Heart left ventricle (tissue), 16 donors: ENCODE measurements at regions of chr15 and their contacts with region 1.

Region 1: GRCh38 chr15:64153480-64154367 is 2.2 kb downstream of the SNX22 start:
- DNase-seq: peak; percentile 88 to 95 (median 91)
- ATAC-seq: peak; percentile 72 to 91 (median 77)
- H3K4me3 ChIP-seq: peak overlapping the region in 3 of 12 donors; percentile 2 to 8 (median 3)
- H3K27ac ChIP-seq: peak overlapping the region in 11 of 12 donors; percentile 50 to 88 (median 80)
- H3K4me1 ChIP-seq: peaks cover 10 to 64% (median 42%) of the 10 kb centered on the region in 12 donors
- H3K27me3 ChIP-seq: peaks cover 0 to 24% (median 0%) of the 10 kb centered on the region in 9 donors
- CTCF ChIP-seq: peak; percentile 94 to 99 (median 98)
- POLR2A ChIP-seq: no peak

Region 2: GRCh38 chr15:63234451-63234870 is 919.3 kb before region 1 on chr15:
- intact Hi-C with region 1: no loop called
- DNase-seq: peak; percentile 55 to 60 (median 56)
- ATAC-seq: peak; percentile 70 to 87 (median 84)
- H3K4me3 ChIP-seq: peak overlapping the region in 2 of 12 donors; percentile 8 to 20
- H3K27ac ChIP-seq: peak overlapping the region; percentile 15 to 85 (median 58)
- H3K4me1 ChIP-seq: peaks cover 2 to 90% (median 33%) of the 10 kb centered on the region in 12 donors
- H3K27me3 ChIP-seq: no peaks in the 10 kb centered on the region
- CTCF ChIP-seq: no peak
- POLR2A ChIP-seq: no peak

Region 3: DNA sequence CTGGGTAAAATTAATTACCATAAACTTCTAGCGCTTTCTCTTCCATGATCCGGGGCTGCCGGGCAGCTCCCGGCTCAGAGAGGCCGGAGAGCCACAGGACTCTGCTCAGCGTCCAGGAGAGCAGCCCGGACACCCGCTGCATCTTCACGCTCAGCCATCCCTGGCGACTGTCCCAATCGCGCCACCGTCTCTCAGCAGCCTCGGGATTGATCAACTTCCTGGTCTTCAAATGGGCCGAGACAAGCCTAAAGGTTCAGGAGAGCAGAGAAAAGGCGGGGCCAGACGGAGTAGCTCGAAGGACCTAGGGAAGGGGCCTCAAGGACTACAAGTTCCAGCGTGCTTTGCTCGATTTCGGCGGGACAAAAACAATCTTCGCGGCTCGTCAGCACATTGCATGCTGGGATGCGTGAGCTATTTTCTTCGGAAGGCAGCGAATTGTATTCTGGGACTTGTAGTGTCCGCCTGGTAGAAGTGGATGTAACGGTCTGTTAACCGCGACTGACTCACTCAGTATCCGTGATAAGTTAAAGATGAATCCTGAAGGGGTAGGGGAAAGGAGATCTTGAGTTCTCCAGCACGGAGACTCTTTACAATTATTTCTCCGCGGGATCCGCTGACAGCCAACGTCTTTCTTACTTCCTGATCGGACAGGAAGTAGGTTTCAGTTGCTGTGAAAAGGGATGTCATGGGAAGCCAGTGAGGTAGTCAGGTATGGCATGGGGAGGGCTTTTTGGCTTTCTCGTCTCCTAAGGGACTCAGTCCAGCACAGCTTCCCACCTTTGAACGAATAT is 59.9 kb before region 1 on chr15 and contains the start of gene CIAO2A:
- intact Hi-C with region 1: loop called in 8 of 10 experiments (anchors 5 to 10 kb)
- DNase-seq: peak; percentile 93 to 97 (median 96)
- ATAC-seq: peak; percentile 79 to 89 (median 88)
- H3K4me3 ChIP-seq: peak within 1 kb of the TSS; percentile 62 to 88 (median 80)
- H3K27ac ChIP-seq: peak within 1 kb of the TSS; percentile 80 to 97 (median 88)
- H3K4me1 ChIP-seq: peaks cover 5 to 84% (median 58%) of the 10 kb centered on the region in 12 donors
- H3K27me3 ChIP-seq: no peaks in the 10 kb centered on the region
- CTCF ChIP-seq: no peak
- POLR2A ChIP-seq: peak in 1 of 2 donors; percentile 66
- total RNA-seq, gene CIAO2A: 41.6 to 79.5 (median 55.4) TPM

Region 4: GRCh38 chr15:64105113-64105704 is 48.5 kb before region 1 on chr15:
- intact Hi-C with region 1: loop called in 1 of 10 experiments (anchors 5 kb)
- DNase-seq: peak in 1 of 5 donors; percentile 28
- ATAC-seq: peak in 3 of 4 donors; percentile 67 to 74 (median 68)
- H3K4me3 ChIP-seq: peak overlapping the region in 1 of 12 donors; percentile 5
- H3K27ac ChIP-seq: peak overlapping the region in 9 of 12 donors; percentile 13 to 85 (median 40)
- H3K4me1 ChIP-seq: peaks cover 3 to 92% (median 41%) of the 10 kb centered on the region in 12 donors
- H3K27me3 ChIP-seq: no peaks in the 10 kb centered on the region
- CTCF ChIP-seq: no peak
- POLR2A ChIP-seq: no peak